HepG2 (cell line): ENCODE measurements at regions of chr1 and their contacts with region 1.

Region 1: DNA sequence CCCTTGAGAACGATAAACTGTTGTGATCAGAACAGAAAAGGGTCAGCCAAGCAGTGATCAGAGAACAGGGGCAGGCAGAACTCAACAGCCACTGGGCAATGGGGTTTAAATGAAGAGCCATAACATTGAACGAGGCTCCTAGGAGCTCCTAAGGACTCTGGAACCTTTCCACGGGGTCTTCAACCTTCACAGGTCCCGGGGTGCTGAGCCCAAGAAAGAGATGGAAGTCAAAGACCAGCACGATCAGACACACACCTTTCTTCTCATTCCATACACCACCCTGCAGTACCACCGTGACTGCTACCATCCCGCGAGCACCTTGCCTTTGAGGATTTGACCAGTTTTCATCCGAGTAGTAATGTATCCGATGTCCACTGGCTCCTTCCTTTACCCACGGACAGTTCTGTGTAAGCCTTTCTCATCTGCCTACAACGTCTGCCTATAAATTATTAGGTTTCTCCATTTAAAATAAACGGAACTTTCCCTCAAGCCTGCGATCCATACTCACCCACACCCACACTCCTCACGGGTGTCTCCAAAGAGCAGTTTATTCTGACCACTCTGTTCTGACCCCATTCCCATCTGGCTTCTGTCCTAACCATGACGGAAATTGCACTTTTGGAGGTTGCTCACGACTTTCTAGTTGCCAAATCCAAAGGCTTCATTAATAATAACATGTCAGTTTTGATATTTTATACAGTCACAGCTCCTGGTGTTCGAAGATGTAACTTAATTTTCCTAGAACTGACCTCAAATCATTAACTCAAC is 16.8 kb upstream of the HHAT start:
- DNase-seq: no peak
- ATAC-seq: peak; percentile 55
- H3K4me3 ChIP-seq: peak overlapping the region in 1 of 3 experiments; percentile 53; a peak in 1 of 6 replicates
- H3K27ac ChIP-seq: no peak overlapping the region
- H3K4me1 ChIP-seq: 0 out of 2 replicates have a peak, but pooled peaks cover 5% of the 10 kb centered on the region
- H3K27me3 ChIP-seq: peaks cover 0 to 17% of the 10 kb centered on the region in 2 experiments; a peak in 1 of 5 replicates
- CTCF ChIP-seq: no peak
- EP300 ChIP-seq: no peak
- POLR2A ChIP-seq: no peak
- RAD21 ChIP-seq: no peak

Region 2: GRCh38 chr1:209860293-209860881 is 451.5 kb before region 1 on chr1:
- CTCF ChIA-PET with region 1: interaction called, 3 read pairs
- POLR2A ChIA-PET with region 1: no interaction called
- in situ Hi-C with region 1: loop called (anchors 25 kb)
- intact Hi-C with region 1: loop called (anchors 1 kb)
- DNase-seq: peak; percentile 72
- ATAC-seq: peak; percentile 97
- H3K4me3 ChIP-seq: no peak overlapping the region
- H3K27ac ChIP-seq: no peak overlapping the region
- H3K4me1 ChIP-seq: no peaks in the 10 kb centered on the region
- H3K27me3 ChIP-seq: no peaks in the 10 kb centered on the region; a peak in 1 of 5 replicates
- CTCF ChIP-seq: peak; percentile 81
- EP300 ChIP-seq: no peak
- POLR2A ChIP-seq: no peak
- RAD21 ChIP-seq: peak; percentile 50

Region 3: DNA sequence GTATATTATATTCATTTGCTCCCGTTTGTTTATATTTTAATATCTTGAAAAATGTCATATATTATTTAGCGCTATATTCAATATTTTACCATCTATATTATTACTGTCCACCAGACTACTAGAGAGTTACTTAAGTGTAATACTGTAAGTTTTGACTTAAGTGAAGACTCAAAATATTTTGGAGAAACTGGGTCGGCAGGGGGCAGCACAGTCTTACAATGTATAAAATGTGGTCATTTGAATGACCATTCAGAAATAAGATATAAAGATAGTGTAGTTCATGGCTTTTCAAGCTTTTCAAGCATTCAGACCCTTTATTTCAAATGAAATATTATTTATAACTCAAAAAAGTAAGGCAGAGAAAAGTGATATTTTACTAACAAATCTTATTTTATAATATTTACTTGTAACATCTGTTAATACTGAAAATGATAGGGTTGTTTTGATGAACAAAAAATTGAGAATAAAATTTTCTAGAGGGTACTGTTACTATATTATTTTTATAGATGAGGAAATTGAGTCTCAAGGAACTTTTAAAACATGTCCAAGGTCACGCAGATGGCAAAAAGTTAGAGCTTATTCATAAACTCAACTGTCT is 168.3 kb before region 1 on chr1:
- CTCF ChIA-PET with region 1: interaction called, 22 read pairs
- POLR2A ChIA-PET with region 1: no interaction called
- in situ Hi-C with region 1: loop called (anchors 5 kb)
- intact Hi-C with region 1: loop called (anchors 1 kb)
- DNase-seq: peak; percentile 29
- ATAC-seq: no peak
- H3K4me3 ChIP-seq: no peak overlapping the region
- H3K27ac ChIP-seq: no peak overlapping the region
- H3K4me1 ChIP-seq: no peaks in the 10 kb centered on the region
- H3K27me3 ChIP-seq: no peaks in the 10 kb centered on the region
- CTCF ChIP-seq: peak; percentile 61
- EP300 ChIP-seq: no peak
- POLR2A ChIP-seq: no peak
- RAD21 ChIP-seq: no peak

Region 4: GRCh38 chr1:210233216-210234020 is 78.5 kb before region 1 on chr1:
- CTCF ChIA-PET with region 1: no interaction called
- POLR2A ChIA-PET with region 1: no interaction called
- in situ Hi-C with region 1: no loop called
- intact Hi-C with region 1: loop called (anchors 10 kb)
- DNase-seq: no peak
- ATAC-seq: peak; percentile 76
- H3K4me3 ChIP-seq: peak overlapping the region; percentile 16 to 59 (median 17); a peak in 3 of 6 replicates
- H3K27ac ChIP-seq: no peak overlapping the region
- H3K4me1 ChIP-seq: peaks cover 7% of the 10 kb centered on the region; the same call in 1 of the 2 replicates
- H3K27me3 ChIP-seq: peaks cover 4 to 66% of the 10 kb centered on the region in 2 experiments
- CTCF ChIP-seq: no peak
- EP300 ChIP-seq: no peak
- POLR2A ChIP-seq: no peak
- RAD21 ChIP-seq: no peak

Region 5: GRCh38 chr1:210400043-210400840 is 88.3 kb after region 1 on chr1:
- CTCF ChIA-PET with region 1: no interaction called
- POLR2A ChIA-PET with region 1: no interaction called
- in situ Hi-C with region 1: no loop called
- intact Hi-C with region 1: loop called (anchors 1 kb)
- DNase-seq: peak; percentile 65
- ATAC-seq: peak; percentile 99
- H3K4me3 ChIP-seq: no peak overlapping the region
- H3K27ac ChIP-seq: no peak overlapping the region
- H3K4me1 ChIP-seq: peaks cover 7% of the 10 kb centered on the region
- H3K27me3 ChIP-seq: no peaks in the 10 kb centered on the region
- CTCF ChIP-seq: peak; percentile 91
- EP300 ChIP-seq: no peak
- POLR2A ChIP-seq: no peak
- RAD21 ChIP-seq: peak; percentile 90

Region 6: GRCh38 chr1:211155040-211155439 is 843.1 kb after region 1 on chr1:
- CTCF ChIA-PET with region 1: no interaction called
- POLR2A ChIA-PET with region 1: no interaction called
- in situ Hi-C with region 1: no loop called
- intact Hi-C with region 1: no loop called
- DNase-seq: no peak
- ATAC-seq: no peak
- H3K4me3 ChIP-seq: no peak overlapping the region
- H3K27ac ChIP-seq: no peak overlapping the region
- H3K4me1 ChIP-seq: no peaks in the 10 kb centered on the region
- H3K27me3 ChIP-seq: no peaks in the 10 kb centered on the region
- CTCF ChIP-seq: no peak
- EP300 ChIP-seq: no peak
- POLR2A ChIP-seq: no peak
- RAD21 ChIP-seq: no peak